ENCODE measurements at regions of chr2 and their contacts with region 1.

Region 1: DNA sequence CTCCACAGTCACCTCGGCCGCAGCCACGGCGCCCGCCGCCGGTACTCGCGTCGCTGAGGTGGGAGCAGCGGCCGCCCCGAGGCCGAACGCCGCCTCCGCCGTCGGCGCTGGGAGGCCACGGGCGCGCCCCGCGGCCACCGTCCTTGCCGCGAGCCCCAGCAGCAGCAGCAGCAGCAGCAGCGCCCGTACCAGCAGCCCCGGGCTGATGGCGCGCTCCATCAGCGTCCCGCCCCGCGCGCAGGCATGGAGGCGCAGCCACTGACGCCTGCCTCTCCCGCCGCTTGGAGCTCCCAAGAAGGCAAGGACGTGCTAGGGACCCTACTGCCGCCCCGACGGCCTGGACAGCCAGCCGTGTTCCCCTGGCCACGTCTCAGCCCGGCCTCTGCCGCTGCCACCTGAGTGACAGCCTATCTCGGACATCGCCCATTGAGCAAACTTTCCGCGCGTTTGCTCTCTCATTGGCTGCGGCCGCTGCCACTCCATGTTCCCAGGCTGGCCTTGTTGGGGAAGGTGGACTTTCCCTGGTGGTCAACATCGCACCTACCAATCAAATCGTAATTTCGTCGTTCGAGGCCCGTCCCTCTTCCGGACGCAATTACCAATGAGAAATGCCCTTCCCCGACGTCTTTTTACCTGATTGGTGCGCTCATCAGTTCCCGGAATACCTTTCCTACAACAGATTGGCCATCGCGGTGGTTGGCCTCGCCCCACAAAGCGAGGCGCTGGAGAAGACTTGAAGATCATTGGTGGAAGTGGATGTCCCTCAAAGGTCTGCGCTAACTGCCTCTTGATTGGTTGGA is at the start of gene EIF2AK3:
- DNase-seq: peak; percentile 98 to 100
- ATAC-seq: peak; percentile 92 to 97 (median 96)
- H3K4me3 ChIP-seq: peak within 1 kb of the TSS; percentile 54 to 95 (median 91)
- H3K27ac ChIP-seq: peak within 1 kb of the TSS; percentile 81 to 99 (median 96)
- H3K4me1 ChIP-seq: peaks cover 0 to 54% (median 44%) of the 10 kb centered on the region in 9 donors
- H3K27me3 ChIP-seq: no peaks in the 10 kb centered on the region
- CTCF ChIP-seq: peak in 4 of 9 donors; percentile 16 to 37 (median 30)
- total RNA-seq, gene EIF2AK3: 5.9 to 21.5 (median 10.4) TPM

Region 2: DNA sequence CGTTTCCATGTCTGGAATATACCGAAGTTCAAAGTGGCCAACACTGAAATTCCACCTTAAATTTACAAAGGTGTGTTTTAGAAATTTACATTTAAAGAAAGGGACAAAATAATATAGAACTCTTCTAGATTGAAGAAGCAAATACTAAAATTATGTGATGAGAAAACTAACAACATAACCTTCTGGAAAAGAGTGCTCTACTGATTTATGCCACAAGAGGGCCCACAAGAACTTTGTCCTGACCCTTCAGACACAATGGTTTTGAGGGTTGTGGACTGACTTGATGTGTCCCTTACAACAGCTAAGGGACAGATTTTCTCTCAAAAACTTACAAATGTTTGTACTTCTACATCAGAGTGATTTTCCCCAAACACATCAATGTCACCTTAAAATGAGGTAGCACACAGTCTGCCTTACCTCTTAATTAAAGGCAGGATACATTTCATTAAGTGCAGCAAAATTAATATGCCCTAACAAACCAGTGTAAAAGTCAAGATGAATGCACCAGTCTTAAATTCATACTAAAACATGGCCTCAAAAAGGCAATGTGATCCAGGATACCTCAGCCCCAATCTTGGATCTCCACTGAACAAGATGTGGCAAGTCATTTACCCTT is 36.1 kb before region 1 on chr2:
- intact Hi-C with region 1: loop called in 6 of 10 experiments (anchors 1 to 5 kb)
- DNase-seq: peak in 1 of 2 donors; percentile 55
- ATAC-seq: peak in 7 of 8 donors; percentile 70 to 93 (median 87)
- H3K4me3 ChIP-seq: no peak overlapping the region
- H3K27ac ChIP-seq: peak overlapping the region in 1 of 10 donors; percentile 12
- H3K4me1 ChIP-seq: peaks cover 0 to 8% (median 0%) of the 10 kb centered on the region in 9 donors
- H3K27me3 ChIP-seq: no peaks in the 10 kb centered on the region
- CTCF ChIP-seq: peak; percentile 65 to 94 (median 82)

Region 3: GRCh38 chr2:88600038-88600465 is 27.2 kb before region 1 on chr2:
- intact Hi-C with region 1: loop called in 3 of 10 experiments (anchors 2 kb)
- DNase-seq: peak in 1 of 2 donors; percentile 55
- ATAC-seq: peak; percentile 79 to 98 (median 94)
- H3K4me3 ChIP-seq: peak overlapping the region in 3 of 10 donors; percentile 2 to 7 (median 2)
- H3K27ac ChIP-seq: peak overlapping the region; percentile 43 to 80 (median 68)
- H3K4me1 ChIP-seq: peaks cover 4 to 75% (median 58%) of the 10 kb centered on the region in 9 donors
- H3K27me3 ChIP-seq: no peaks in the 10 kb centered on the region
- CTCF ChIP-seq: no peak

Region 4: DNA sequence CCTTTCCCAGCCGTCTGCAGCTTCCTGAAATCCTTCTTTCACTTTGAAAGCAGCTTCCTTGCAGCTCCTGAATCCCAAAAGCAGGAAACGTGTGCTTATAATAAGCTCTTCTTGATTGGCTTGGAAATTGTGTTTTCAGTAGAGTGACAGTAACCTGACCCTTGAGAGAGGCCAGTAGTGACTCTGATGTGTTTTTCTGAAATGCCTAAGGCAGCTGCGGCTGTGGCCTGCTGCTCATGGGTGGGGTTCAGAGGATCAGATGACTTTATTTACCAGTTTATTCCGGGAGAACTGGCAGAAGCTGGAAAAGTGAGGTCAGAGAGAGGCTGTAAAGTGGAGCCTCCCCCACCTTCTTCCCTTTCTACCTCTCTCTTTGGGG is 32.3 kb after region 1 on chr2:
- intact Hi-C with region 1: loop called in 1 of 10 experiments (anchors 2 kb)
- DNase-seq: peak in 1 of 2 donors; percentile 54
- ATAC-seq: peak; percentile 72 to 95 (median 90)
- H3K4me3 ChIP-seq: peak overlapping the region in 6 of 10 donors; percentile 10 to 36 (median 24)
- H3K27ac ChIP-seq: peak overlapping the region; percentile 34 to 91 (median 78)
- H3K4me1 ChIP-seq: peaks cover 8 to 33% (median 20%) of the 10 kb centered on the region in 9 donors
- H3K27me3 ChIP-seq: no peaks in the 10 kb centered on the region
- CTCF ChIP-seq: no peak

Region 5: GRCh38 chr2:88669371-88670214 is 42.3 kb after region 1 on chr2:
- intact Hi-C with region 1: loop called in 4 of 10 experiments (anchors 5 kb)
- DNase-seq: no peak
- ATAC-seq: peak in 7 of 8 donors; percentile 42 to 84 (median 75)
- H3K4me3 ChIP-seq: no peak overlapping the region
- H3K27ac ChIP-seq: no peak overlapping the region
- H3K4me1 ChIP-seq: peaks cover 0 to 6% (median 0%) of the 10 kb centered on the region in 9 donors
- H3K27me3 ChIP-seq: no peaks in the 10 kb centered on the region
- CTCF ChIP-seq: peak; percentile 28 to 77 (median 64)

Region 6: GRCh38 chr2:88691339-88692183 is 64.3 kb after region 1 on chr2 and contains the start of gene RPIA:
- intact Hi-C with region 1: loop called in 2 of 10 experiments (anchors 1 to 5 kb)
- DNase-seq: peak; percentile 98 to 100
- ATAC-seq: peak; percentile 99 to 100 (median 99)
- H3K4me3 ChIP-seq: peak within 1 kb of the TSS; percentile 57 to 94 (median 80)
- H3K27ac ChIP-seq: peak within 1 kb of the TSS in 9 of 10 donors; percentile 63 to 92 (median 81)
- H3K4me1 ChIP-seq: peaks cover 0 to 45% (median 30%) of the 10 kb centered on the region in 9 donors
- H3K27me3 ChIP-seq: no peaks in the 10 kb centered on the region
- CTCF ChIP-seq: peak; percentile 54 to 89 (median 82)
- total RNA-seq, gene RPIA: 9.1 to 18.7 (median 13.5) TPM